Activated CD8-positive, alpha-beta T cell treated with anti-CD3 and anti-CD28 coated beads for 36 hours (primary cell): ENCODE measurements at regions of chr6 and their contacts with region 1.

Region 1: GRCh38 chr6:24902782-24903181 is 33.0 kb downstream of the RIPOR2 start:
- DNase-seq: no peak
- ATAC-seq: no peak
- H3K4me3 Mint-ChIP-seq: no peak overlapping the region
- H3K27ac Mint-ChIP-seq: peak overlapping the region; percentile 87
- H3K4me1 Mint-ChIP-seq: peaks cover 90% of the 10 kb centered on the region
- H3K27me3 Mint-ChIP-seq: no peaks in the 10 kb centered on the region
- CTCF ChIP-seq: no peak

Region 2: GRCh38 chr6:24883618-24884017 is 19.2 kb before region 1 on chr6:
- CTCF ChIA-PET with region 1: interaction called, 37 read pairs
- POLR2A ChIA-PET with region 1: interaction called, 22 read pairs
- intact Hi-C with region 1: no loop called
- DNase-seq: peak; percentile 69
- ATAC-seq: peak; percentile 79
- H3K4me3 Mint-ChIP-seq: peak overlapping the region; percentile 49
- H3K27ac Mint-ChIP-seq: peak overlapping the region; percentile 97
- H3K4me1 Mint-ChIP-seq: peaks cover 84% of the 10 kb centered on the region
- H3K27me3 Mint-ChIP-seq: no peaks in the 10 kb centered on the region
- CTCF ChIP-seq: no peak

Region 3: GRCh38 chr6:24888715-24889370 is 13.9 kb before region 1 on chr6:
- CTCF ChIA-PET with region 1: interaction called, 37 read pairs
- POLR2A ChIA-PET with region 1: interaction called, 22 read pairs
- intact Hi-C with region 1: no loop called
- DNase-seq: no peak
- ATAC-seq: no peak
- H3K4me3 Mint-ChIP-seq: peak overlapping the region; percentile 18
- H3K27ac Mint-ChIP-seq: peak overlapping the region; percentile 88
- H3K4me1 Mint-ChIP-seq: peaks cover 83% of the 10 kb centered on the region
- H3K27me3 Mint-ChIP-seq: no peaks in the 10 kb centered on the region
- CTCF ChIP-seq: peak; percentile 27

Region 4: GRCh38 chr6:24919004-24919892 is 16.5 kb after region 1 on chr6:
- CTCF ChIA-PET with region 1: interaction called, 7 read pairs
- POLR2A ChIA-PET with region 1: interaction called, 191 read pairs
- intact Hi-C with region 1: no loop called
- DNase-seq: peak; percentile 46
- ATAC-seq: peak; percentile 11
- H3K4me3 Mint-ChIP-seq: peak overlapping the region; percentile 69
- H3K27ac Mint-ChIP-seq: peak overlapping the region; percentile 94
- H3K4me1 Mint-ChIP-seq: peaks cover 82% of the 10 kb centered on the region
- H3K27me3 Mint-ChIP-seq: no peaks in the 10 kb centered on the region
- CTCF ChIP-seq: no peak

Region 5: GRCh38 chr6:24924580-24925356 is 22.0 kb after region 1 on chr6:
- CTCF ChIA-PET with region 1: interaction called, 8 read pairs
- POLR2A ChIA-PET with region 1: interaction called, 191 read pairs
- intact Hi-C with region 1: no loop called
- DNase-seq: peak; percentile 75
- ATAC-seq: peak; percentile 61
- H3K4me3 Mint-ChIP-seq: peak overlapping the region; percentile 62
- H3K27ac Mint-ChIP-seq: peak overlapping the region; percentile 94
- H3K4me1 Mint-ChIP-seq: peaks cover 72% of the 10 kb centered on the region
- H3K27me3 Mint-ChIP-seq: peaks cover 4% of the 10 kb centered on the region
- CTCF ChIP-seq: no peak